Ovary (tissue), 10 donors: ENCODE measurements at regions of chr20 and their contacts with region 1.

Region 1: GRCh38 chr20:13111249-13111911 is 102.6 kb downstream of the SPTLC3 start:
- DNase-seq: no peak
- H3K4me3 ChIP-seq: no peak overlapping the region
- H3K27ac ChIP-seq: no peak overlapping the region
- H3K4me1 ChIP-seq: no peaks in the 10 kb centered on the region
- H3K27me3 ChIP-seq: no peaks in the 10 kb centered on the region
- CTCF ChIP-seq: no peak
- EP300 ChIP-seq: no peak
- POLR2A ChIP-seq: no peak

Region 2: GRCh38 chr20:12827816-12828401 is 283.5 kb before region 1 on chr20:
- intact Hi-C with region 1: no loop called
- DNase-seq: no peak
- H3K4me3 ChIP-seq: no peak overlapping the region
- H3K27ac ChIP-seq: no peak overlapping the region
- H3K4me1 ChIP-seq: peaks cover 4% of the 10 kb centered on the region
- H3K27me3 ChIP-seq: no peaks in the 10 kb centered on the region
- CTCF ChIP-seq: no peak
- EP300 ChIP-seq: no peak
- POLR2A ChIP-seq: no peak

Region 3: DNA sequence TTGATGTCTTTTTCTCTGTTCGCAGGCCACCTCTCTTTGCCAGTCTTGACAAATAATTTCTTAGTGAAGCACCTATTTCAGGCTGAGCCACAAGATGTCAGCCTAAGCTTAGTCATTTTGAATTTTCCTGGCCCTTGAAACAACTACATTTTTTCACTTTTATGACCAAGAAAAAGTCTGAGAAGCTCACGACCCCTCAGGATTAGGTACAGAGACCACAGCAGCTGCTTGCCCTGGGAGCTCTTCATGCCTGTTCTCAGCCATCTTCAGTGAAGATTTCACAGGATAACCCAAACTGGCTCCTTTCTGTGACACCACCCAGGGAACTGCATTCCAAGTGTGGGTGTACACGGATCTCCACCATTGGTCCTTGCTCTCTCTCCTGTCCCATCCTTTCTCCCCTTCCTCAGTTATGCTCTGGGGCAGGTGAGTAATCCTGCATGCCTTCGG is 141.0 kb before region 1 on chr20:
- intact Hi-C with region 1: loop called (anchors 5 to 10 kb)
- DNase-seq: peak in 1 of 5 donors; percentile 22
- H3K4me3 ChIP-seq: no peak overlapping the region
- H3K27ac ChIP-seq: no peak overlapping the region
- H3K4me1 ChIP-seq: no peaks in the 10 kb centered on the region
- H3K27me3 ChIP-seq: no peaks in the 10 kb centered on the region
- CTCF ChIP-seq: peak in 2 of 3 donors; percentile 31 to 40
- EP300 ChIP-seq: no peak
- POLR2A ChIP-seq: no peak